Caco-2 (cell line): ENCODE measurements at regions of chr14 and their contacts with region 1.

Region 1: GRCh38 chr14:23379366-23380196 is 2.7 kb downstream of the CMTM5 start:
- DNase-seq: peak; percentile 62 to 73
- H3K4me3 ChIP-seq: no peak overlapping the region
- H3K4me3 Mint-ChIP-seq: no peak overlapping the region
- H3K27ac Mint-ChIP-seq: no peak overlapping the region
- H3K4me1 ChIP-seq: no peaks in the 10 kb centered on the region
- H3K4me1 Mint-ChIP-seq: no peaks in the 10 kb centered on the region
- H3K27me3 ChIP-seq: no peaks in the 10 kb centered on the region
- H3K27me3 Mint-ChIP-seq: peaks cover 14% of the 10 kb centered on the region
- CTCF ChIP-seq: peak; percentile 92 to 97

Region 2: GRCh38 chr14:23269193-23269592 is 110.4 kb before region 1 on chr14:
- CTCF ChIA-PET with region 1: interaction called, 4 read pairs
- POLR2A ChIA-PET with region 1: no interaction called
- intact Hi-C with region 1: loop called (anchors 1 kb)
- DNase-seq: no peak
- H3K4me3 ChIP-seq: no peak overlapping the region
- H3K4me3 Mint-ChIP-seq: no peak overlapping the region
- H3K27ac Mint-ChIP-seq: no peak overlapping the region
- H3K4me1 ChIP-seq: no peaks in the 10 kb centered on the region
- H3K4me1 Mint-ChIP-seq: no peaks in the 10 kb centered on the region
- H3K27me3 ChIP-seq: no peaks in the 10 kb centered on the region
- H3K27me3 Mint-ChIP-seq: peaks cover 3% of the 10 kb centered on the region
- CTCF ChIP-seq: no peak

Region 3: GRCh38 chr14:23327947-23328744 is 51.4 kb before region 1 on chr14:
- CTCF ChIA-PET with region 1: interaction called, 12 read pairs
- POLR2A ChIA-PET with region 1: no interaction called
- intact Hi-C with region 1: loop called (anchors 1 kb)
- DNase-seq: peak; percentile 65 to 69
- H3K4me3 ChIP-seq: no peak overlapping the region
- H3K4me3 Mint-ChIP-seq: no peak overlapping the region
- H3K27ac Mint-ChIP-seq: no peak overlapping the region
- H3K4me1 ChIP-seq: no peaks in the 10 kb centered on the region
- H3K4me1 Mint-ChIP-seq: peaks cover 1% of the 10 kb centered on the region
- H3K27me3 ChIP-seq: no peaks in the 10 kb centered on the region
- H3K27me3 Mint-ChIP-seq: no peaks in the 10 kb centered on the region
- CTCF ChIP-seq: peak; percentile 73 to 74

Region 4: DNA sequence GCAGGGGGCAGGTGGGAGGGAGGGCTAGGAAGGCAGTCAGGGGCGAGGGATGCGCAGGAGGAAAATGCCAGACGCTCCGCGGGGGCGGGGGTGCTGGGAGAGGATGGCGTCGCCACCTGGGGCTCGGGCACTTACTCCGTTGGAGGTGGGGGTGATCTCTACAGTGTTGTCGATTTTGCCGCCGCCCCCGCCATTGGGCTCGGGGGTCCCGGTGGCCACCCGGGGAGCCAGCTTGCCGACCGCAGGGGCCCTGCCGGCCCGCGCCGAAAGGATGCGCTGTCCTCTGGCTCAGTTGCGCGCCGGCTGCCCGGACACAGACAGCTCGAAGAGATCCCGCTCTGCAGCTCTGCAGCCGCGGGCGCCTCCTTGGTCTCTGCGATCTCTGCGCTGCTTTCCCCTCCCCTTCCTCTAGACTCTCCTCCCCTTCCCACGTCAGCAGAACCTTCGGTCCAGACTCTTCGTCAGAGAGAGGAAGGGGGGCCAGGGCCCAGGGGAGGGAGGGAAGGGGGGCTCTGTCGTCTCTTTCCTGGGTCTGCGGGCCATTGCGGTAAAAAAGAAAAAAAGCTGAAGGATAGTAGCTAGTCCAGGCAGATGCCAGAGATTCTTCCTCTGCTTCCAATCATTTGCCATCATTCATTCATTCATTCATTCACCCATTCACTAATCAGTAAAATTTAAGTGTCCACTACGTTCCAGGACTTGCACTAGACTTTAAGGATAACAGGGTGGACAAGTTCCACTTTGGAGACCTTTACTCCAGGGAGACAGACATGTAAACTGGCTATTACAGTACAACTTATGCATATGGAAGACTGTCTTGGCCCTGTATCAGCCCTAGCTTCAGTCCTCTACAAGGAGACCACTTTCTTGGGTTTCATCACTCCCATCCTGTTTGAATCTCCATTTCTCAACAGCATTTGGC is 26.8 kb before region 1 on chr14 and contains the start of gene SLC22A17:
- CTCF ChIA-PET with region 1: interaction called, 4 read pairs
- POLR2A ChIA-PET with region 1: no interaction called
- intact Hi-C with region 1: loop called (anchors 2 kb)
- DNase-seq: peak; percentile 67 to 73
- H3K4me3 ChIP-seq: peak within 1 kb of the TSS; percentile 53
- H3K4me3 Mint-ChIP-seq: peak within 1 kb of the TSS; percentile 71
- H3K27ac Mint-ChIP-seq: no peak within 1 kb of the TSS
- H3K4me1 ChIP-seq: 0 out of 2 replicates have a peak, but pooled peaks cover 3% of the 10 kb centered on the region
- H3K4me1 Mint-ChIP-seq: peaks cover 6% of the 10 kb centered on the region
- H3K27me3 ChIP-seq: no peaks in the 10 kb centered on the region
- H3K27me3 Mint-ChIP-seq: peaks cover 17% of the 10 kb centered on the region
- CTCF ChIP-seq: no peak
- total RNA-seq, gene SLC22A17: 3.1 and 3.7 TPM in 2 replicates

Region 5: DNA sequence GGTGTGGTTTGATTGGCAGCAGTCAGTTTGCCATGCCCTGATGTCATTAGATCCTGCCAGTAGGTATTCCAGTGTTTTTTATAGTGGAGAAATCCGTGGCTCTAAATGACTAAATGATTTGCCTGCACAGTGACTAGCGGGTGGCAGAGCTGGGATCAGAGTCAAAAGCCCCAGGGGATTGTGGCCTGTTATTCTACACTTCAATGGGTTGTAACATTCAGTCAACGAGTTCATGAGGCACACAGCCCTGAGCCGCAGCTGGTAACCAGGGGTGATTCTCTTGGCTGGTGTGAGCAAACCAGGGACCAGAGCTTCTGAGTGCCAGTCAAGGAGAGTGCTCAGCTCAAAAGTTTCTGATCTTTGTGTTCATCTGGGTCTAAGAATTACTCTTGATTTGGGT is 26.7 kb after region 1 on chr14:
- CTCF ChIA-PET with region 1: no interaction called
- POLR2A ChIA-PET with region 1: no interaction called
- intact Hi-C with region 1: no loop called
- DNase-seq: no peak
- H3K4me3 ChIP-seq: no peak overlapping the region
- H3K4me3 Mint-ChIP-seq: no peak overlapping the region
- H3K27ac Mint-ChIP-seq: no peak overlapping the region
- H3K4me1 ChIP-seq: no peaks in the 10 kb centered on the region
- H3K4me1 Mint-ChIP-seq: no peaks in the 10 kb centered on the region
- H3K27me3 ChIP-seq: no peaks in the 10 kb centered on the region; the same call in 1 of the 2 replicates
- H3K27me3 Mint-ChIP-seq: peaks cover 28% of the 10 kb centered on the region
- CTCF ChIP-seq: no peak

Region 6: DNA sequence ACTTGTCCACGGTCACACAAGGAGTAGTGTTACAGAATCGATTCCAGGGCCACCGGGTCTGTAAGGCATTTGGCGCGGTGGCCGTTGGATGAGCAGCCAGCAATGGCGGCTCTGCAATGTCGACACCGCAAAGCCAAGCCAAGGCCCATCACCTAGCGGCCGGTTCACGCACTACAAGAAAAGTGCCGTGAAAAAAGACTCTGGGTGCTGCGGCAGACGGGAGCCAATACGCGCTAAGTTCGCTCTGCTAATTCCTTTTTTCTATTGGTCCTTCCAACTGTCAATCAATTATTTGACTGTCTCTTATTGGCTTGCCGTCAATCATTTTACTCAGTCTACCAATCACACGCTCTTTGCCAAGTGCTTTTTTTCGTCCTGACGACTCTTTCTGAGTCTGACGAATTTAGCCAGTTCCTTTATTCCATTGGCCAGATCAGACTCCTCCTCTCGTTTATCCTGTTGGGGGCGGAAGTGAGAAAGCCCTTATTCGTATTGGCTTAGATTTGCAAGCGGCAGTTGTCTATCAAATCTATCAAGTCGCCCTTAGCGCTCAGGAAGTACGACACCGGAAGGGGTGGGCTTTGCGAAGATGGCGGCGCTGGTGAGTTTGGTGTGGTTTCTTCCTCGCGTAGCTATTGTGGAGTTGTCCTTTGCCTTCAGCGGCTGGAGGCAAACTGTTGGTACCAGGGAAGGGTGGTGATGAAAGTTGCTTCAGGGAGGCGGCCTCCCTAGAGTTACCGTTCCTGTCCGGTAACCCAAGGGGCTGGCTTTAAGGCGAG is 89.7 kb after region 1 on chr14 and contains the start of gene NGDN:
- CTCF ChIA-PET with region 1: no interaction called
- POLR2A ChIA-PET with region 1: no interaction called
- intact Hi-C with region 1: loop called (anchors 5 kb)
- DNase-seq: peak; percentile 96 to 97
- H3K4me3 ChIP-seq: peak within 1 kb of the TSS; percentile 87
- H3K4me3 Mint-ChIP-seq: no peak within 1 kb of the TSS
- H3K27ac Mint-ChIP-seq: no peak within 1 kb of the TSS
- H3K4me1 ChIP-seq: peaks cover 15% of the 10 kb centered on the region
- H3K4me1 Mint-ChIP-seq: peaks cover 12% of the 10 kb centered on the region
- H3K27me3 ChIP-seq: no peaks in the 10 kb centered on the region
- H3K27me3 Mint-ChIP-seq: no peaks in the 10 kb centered on the region
- CTCF ChIP-seq: peak; percentile 81 to 83
- total RNA-seq, gene NGDN: 54.5 and 55.0 TPM in 2 replicates

Region 7: DNA sequence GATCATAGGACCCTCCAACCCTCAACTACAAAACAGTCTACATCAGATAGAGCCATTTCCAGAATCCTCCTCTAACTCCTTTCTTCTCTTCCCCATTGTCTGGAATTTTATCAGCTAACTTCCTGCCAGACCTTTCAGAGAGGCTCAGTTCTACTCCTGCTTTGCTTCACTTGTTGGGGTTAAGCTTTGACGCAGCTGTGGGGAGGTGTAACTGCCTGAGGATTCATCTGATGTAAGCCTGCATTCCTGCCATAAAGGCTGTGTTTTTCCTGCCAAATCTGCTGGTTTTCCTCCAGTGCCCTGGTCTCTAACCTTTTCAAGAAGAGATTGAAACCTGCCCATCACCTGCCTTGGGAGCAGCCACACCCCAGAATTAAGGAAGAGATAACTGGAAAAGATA is 273.5 kb after region 1 on chr14:
- CTCF ChIA-PET with region 1: no interaction called
- POLR2A ChIA-PET with region 1: no interaction called
- intact Hi-C with region 1: loop called (anchors 10 kb)
- DNase-seq: no peak
- H3K4me3 ChIP-seq: no peak overlapping the region
- H3K4me3 Mint-ChIP-seq: no peak overlapping the region
- H3K27ac Mint-ChIP-seq: no peak overlapping the region
- H3K4me1 ChIP-seq: no peaks in the 10 kb centered on the region
- H3K4me1 Mint-ChIP-seq: no peaks in the 10 kb centered on the region
- H3K27me3 ChIP-seq: no peaks in the 10 kb centered on the region
- H3K27me3 Mint-ChIP-seq: peaks cover 3% of the 10 kb centered on the region
- CTCF ChIP-seq: no peak

Region 8: DNA sequence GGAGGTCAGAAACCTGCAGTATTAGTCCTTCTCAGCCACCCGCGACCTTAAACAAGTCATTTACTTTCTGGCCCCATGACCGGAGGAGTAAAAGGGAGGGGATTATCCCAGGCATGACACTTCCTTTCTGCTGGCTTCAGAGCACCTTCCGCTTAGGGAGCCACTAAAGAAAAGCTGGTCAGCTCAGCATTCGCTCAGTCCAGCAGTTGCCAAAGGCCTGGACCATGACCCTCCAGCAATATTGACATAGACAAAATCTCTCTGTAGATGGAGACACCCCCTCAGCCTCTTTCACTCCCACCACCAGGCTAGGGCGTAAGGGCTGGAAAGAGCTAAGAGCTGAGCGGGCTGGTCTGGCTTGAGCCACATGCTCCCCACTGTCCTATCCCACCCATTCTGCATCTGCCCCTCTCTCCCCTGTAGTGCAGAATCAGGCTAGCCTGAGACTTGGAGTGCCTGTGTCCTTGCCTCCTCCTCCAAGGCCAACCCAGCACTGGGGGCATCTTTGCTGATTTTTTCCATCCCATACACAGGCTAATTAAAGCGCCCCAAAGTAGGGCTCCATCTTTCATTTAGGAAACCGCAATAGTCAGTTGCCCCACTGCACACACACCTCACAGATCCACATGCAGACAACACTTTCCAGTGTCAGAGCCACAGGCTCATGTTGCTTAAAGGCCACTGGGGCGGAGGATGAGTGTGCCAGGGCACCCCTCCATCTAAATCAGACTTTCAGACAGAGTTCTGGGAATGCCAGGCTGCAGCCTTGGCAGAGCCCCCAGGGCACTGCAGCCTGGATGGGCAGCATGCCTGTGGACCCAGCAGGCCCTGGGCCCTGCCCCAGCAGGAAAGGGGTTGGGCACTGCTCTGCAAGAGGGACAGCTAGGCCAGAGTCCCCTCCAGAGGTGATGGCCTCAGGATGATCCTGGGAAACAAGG is 687.8 kb after region 1 on chr14:
- CTCF ChIA-PET with region 1: no interaction called
- POLR2A ChIA-PET with region 1: no interaction called
- intact Hi-C with region 1: loop called (anchors 5 kb)
- DNase-seq: no peak
- H3K4me3 ChIP-seq: no peak overlapping the region
- H3K4me3 Mint-ChIP-seq: no peak overlapping the region
- H3K27ac Mint-ChIP-seq: peak overlapping the region; percentile 25
- H3K4me1 ChIP-seq: peaks cover 14% of the 10 kb centered on the region; the same call in 1 of the 2 replicates
- H3K4me1 Mint-ChIP-seq: peaks cover 6% of the 10 kb centered on the region
- H3K27me3 ChIP-seq: no peaks in the 10 kb centered on the region
- H3K27me3 Mint-ChIP-seq: no peaks in the 10 kb centered on the region
- CTCF ChIP-seq: no peak